ENCODE measurements at regions of chr20 and their contacts with region 1.

Region 1: GRCh38 chr20:42807876-42808275 is 381.8 kb downstream of the PTPRT start:
- DNase-seq: no peak

Region 2: DNA sequence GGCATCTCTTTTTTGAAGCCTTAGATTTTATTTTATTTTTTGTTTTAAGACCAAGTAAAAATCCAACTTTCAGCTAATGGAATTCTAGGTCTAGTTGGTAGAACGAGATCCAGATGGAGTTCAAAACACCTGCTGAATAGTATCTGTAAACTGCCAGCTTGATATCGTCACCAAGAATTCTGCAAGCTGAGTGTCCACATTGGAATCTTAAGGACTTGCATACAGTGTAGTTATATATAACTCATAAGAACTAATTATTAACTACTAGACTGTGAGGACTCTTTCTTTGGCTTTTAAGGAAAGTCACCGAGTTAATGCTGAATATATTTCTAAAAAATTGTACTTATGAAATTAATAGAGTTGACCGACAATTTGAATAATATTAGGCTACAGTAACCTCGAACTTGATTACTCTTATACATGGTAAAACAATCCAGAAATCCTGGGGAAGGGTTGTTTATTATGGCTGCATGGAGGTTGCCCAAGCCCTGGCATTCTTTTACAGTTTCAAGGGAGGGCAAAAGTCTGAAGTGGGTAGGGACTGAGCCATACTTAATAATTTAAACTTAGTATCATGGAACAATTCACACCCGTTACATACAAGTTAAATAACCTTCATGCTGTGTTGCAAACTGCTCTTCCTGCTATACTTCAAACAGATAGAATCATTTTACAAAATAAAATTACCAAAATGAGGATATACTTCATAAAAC is 172.0 kb before region 1 on chr20:
- in situ Hi-C with region 1: no loop called
- DNase-seq: no peak

Region 3: GRCh38 chr20:42714298-42715141 is 93.4 kb before region 1 on chr20:
- in situ Hi-C with region 1: loop called (anchors 25 kb)
- DNase-seq: no peak

Region 4: DNA sequence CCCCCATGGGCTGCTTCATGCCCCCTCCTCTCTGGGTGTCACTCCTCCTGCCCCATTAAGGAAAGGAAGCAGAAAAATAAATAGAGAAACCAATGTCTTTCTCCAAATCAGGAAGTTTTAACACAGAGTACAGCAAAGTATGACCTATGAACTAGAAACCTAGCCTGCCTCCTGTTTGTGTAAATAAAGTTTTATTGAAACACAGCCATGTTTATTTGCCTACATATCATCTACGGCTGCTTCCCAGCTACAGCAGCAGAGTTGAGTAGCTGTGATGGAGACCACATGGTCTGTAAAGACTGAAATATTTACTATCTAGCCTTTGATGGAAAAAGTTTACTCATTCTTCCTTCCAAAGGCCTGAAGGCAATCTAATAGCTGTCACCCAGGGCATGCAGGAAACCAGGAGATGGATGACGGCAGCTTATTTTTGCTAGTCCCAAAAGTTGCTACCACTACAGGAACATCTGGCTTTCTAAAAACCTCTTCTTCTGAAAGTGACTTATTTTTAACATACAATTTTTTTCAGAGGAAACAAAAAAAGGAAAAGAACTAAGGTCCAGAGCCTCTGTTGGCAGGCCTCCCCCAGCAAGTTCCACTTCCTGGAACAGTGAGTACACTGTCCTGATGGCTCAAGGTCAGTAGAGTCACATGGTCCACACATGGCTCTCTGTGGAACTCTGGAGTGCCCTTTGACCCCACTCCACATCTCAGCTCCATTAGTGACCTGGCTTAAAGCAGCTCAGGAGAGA is 94.0 kb after region 1 on chr20:
- in situ Hi-C with region 1: no loop called
- DNase-seq: no peak

Region 5: GRCh38 chr20:43043887-43044286 is 236.0 kb after region 1 on chr20:
- in situ Hi-C with region 1: no loop called
- DNase-seq: no peak

Region 6: GRCh38 chr20:43055181-43055884 is 247.5 kb after region 1 on chr20:
- in situ Hi-C with region 1: no loop called
- DNase-seq: no peak

Measured in KBM-7 (cell line).